WTC11 (cell line): ENCODE measurements at regions of chr3 and their contacts with region 1.

Region 1: GRCh38 chr3:42831321-42831713 is 22.1 kb downstream of the ACKR2 start:
- DNase-seq: peak; percentile 88
- ATAC-seq: peak; percentile 88
- H3K4me3 Mint-ChIP-seq: no peak overlapping the region
- H3K27ac Mint-ChIP-seq: no peak overlapping the region
- H3K4me1 Mint-ChIP-seq: peaks cover 12% of the 10 kb centered on the region
- H3K27me3 Mint-ChIP-seq: no peaks in the 10 kb centered on the region
- CTCF ChIP-seq: peak; percentile 73

Region 2: DNA sequence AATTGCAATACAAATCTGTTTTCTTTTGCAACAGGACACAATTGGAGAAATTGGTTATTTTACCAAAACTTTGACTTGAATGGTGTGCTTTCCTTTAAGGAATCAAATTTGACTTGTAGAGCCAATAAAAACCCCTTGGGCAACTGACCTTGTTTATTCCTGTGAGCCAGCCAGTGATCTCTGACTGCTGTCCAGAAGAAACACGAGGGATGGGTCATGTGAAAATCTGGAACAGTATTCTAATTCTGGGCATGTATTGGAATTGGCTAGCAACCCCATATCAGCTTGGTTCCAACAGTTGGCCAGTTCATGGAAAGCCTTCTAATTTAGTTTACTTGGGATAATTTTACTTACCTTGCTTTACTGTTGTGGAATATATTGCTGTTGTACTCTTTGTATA is 109.6 kb before region 1 on chr3:
- CTCF ChIA-PET with region 1: no interaction called
- POLR2A ChIA-PET with region 1: no interaction called
- DNase-seq: no peak
- ATAC-seq: no peak
- H3K4me3 Mint-ChIP-seq: no peak overlapping the region
- H3K27ac Mint-ChIP-seq: no peak overlapping the region
- H3K4me1 Mint-ChIP-seq: no peaks in the 10 kb centered on the region
- H3K27me3 Mint-ChIP-seq: no peaks in the 10 kb centered on the region
- CTCF ChIP-seq: no peak

Region 3: DNA sequence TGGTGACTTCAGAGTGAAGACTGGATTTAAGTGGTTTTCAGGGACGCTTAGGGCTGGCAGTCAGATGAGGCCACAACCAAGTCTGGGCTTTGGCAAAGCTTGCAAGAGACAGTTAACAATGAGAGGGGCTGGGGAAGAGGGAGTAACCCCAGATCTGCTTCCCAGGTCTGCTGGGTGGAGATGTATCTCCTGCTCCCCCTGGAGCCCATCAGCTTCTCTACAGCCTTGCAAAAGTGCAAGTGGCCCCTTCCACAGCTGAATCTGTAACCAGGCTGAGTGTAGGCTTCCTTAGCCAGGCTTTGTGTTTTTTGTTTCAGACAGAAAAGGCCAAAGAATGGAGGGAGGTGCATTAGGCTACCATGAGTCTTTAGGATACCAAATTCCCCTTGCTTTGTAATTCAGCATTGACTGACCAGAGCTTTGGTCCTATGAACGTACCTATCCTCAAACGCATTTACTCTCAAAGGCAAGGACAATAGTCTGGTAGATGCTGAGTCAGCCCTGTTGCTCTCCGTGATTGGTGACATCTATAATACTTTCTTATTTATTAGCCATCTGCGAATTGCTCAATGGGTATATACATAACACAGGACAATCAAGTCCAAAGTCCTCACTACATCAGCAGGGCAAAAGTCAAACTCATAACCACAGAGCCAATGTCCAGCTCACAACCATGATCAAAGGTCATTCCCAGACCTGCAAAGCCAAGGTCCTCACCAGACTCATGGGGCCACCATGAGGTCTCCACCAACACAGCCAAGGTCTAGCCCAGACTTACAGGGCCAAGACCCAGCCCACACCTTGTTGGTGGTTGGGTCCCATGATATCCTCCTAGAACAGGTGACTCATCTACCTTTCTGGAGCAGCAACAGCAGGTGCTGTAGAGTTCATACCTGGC is 75.4 kb before region 1 on chr3:
- CTCF ChIA-PET with region 1: interaction called, 14 read pairs
- POLR2A ChIA-PET with region 1: no interaction called
- DNase-seq: peak; percentile 59
- ATAC-seq: peak; percentile 99
- H3K4me3 Mint-ChIP-seq: no peak overlapping the region
- H3K27ac Mint-ChIP-seq: no peak overlapping the region
- H3K4me1 Mint-ChIP-seq: no peaks in the 10 kb centered on the region
- H3K27me3 Mint-ChIP-seq: no peaks in the 10 kb centered on the region; the same call in 1 of the 2 replicates
- CTCF ChIP-seq: peak; percentile 14; the same call in 1 of the 2 replicates

Region 4: DNA sequence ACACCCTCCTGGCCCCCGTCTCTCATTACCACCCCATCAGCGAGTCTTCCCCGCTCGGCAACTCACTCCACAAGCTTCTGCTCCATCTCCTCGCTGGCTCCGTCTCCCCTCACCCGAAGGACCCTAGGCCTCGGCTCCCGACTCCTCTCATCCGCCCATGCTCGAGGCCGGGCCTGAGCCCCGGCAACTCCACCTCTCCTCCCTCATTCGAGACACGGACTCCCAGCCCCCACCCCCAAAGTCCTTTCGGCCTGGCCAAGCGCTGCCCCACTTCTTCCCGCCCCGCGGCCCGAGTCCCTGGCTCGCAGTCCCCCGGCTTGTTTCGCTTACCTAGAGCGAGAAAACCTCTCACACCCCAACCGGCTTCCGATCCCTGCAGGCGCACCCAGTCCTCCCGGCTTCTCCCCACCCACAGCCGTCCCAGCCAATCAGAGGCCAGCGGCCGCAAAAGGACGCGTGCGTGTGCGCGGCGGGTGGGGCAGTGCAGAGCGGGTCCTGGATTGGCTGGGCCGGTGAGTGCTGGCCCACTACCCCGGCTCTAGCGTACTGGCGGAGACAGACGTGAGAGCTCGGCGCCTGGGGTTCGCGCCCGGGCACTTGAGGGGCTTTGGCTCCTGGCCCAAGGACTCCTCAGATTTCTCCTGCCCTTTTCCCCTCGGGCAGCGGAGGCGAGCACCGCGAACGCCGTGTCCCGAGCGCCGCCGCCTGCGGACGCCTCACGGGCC is 27.0 kb before region 1 on chr3 and contains the start of gene HIGD1A:
- CTCF ChIA-PET with region 1: interaction called, 19 read pairs
- POLR2A ChIA-PET with region 1: interaction called, 5 read pairs
- DNase-seq: peak; percentile 94
- ATAC-seq: peak; percentile 97
- H3K4me3 Mint-ChIP-seq: peak within 1 kb of the TSS; percentile 95
- H3K27ac Mint-ChIP-seq: peak within 1 kb of the TSS; percentile 83
- H3K4me1 Mint-ChIP-seq: peaks cover 37% of the 10 kb centered on the region
- H3K27me3 Mint-ChIP-seq: peaks cover 22% of the 10 kb centered on the region
- CTCF ChIP-seq: no peak
- total RNA-seq, gene HIGD1A: 74.6 to 80.7 TPM (median 76.2 TPM) in 3 replicates

Region 5: GRCh38 chr3:42847731-42848130 is 16.4 kb after region 1 on chr3:
- CTCF ChIA-PET with region 1: interaction called, 13 read pairs
- POLR2A ChIA-PET with region 1: no interaction called
- DNase-seq: peak; percentile 14
- ATAC-seq: peak; percentile 55
- H3K4me3 Mint-ChIP-seq: no peak overlapping the region
- H3K27ac Mint-ChIP-seq: no peak overlapping the region
- H3K4me1 Mint-ChIP-seq: peaks cover 14% of the 10 kb centered on the region
- H3K27me3 Mint-ChIP-seq: no peaks in the 10 kb centered on the region
- CTCF ChIP-seq: no peak

Region 6: GRCh38 chr3:42880601-42881451 is 49.5 kb after region 1 on chr3:
- CTCF ChIA-PET with region 1: interaction called, 55 read pairs
- POLR2A ChIA-PET with region 1: no interaction called
- DNase-seq: peak; percentile 91
- ATAC-seq: peak; percentile 97
- H3K4me3 Mint-ChIP-seq: peak overlapping the region; percentile 85
- H3K27ac Mint-ChIP-seq: 0 out of 2 replicates have a peak overlapping the region, but pooled peaks have one; percentile 77
- H3K4me1 Mint-ChIP-seq: peaks cover 25% of the 10 kb centered on the region
- H3K27me3 Mint-ChIP-seq: peaks cover 7% of the 10 kb centered on the region
- CTCF ChIP-seq: peak; percentile 57; the same call in 1 of the 2 replicates